Uterus (tissue), 4 donors: ENCODE measurements at regions of chr7 and their contacts with region 1.

Region 1: GRCh38 chr7:120987683-120988590 is 574 bp upstream of the CPED1 start:
- DNase-seq: peak; percentile 89 to 94
- H3K4me3 ChIP-seq: peak overlapping the region; percentile 49 to 62
- H3K27ac ChIP-seq: peak overlapping the region; percentile 89 to 96
- H3K4me1 ChIP-seq: no peaks in the 10 kb centered on the region
- H3K27me3 ChIP-seq: no peaks in the 10 kb centered on the region
- CTCF ChIP-seq: peak; percentile 90 to 99 (median 94)
- POLR2A ChIP-seq: peak; percentile 20 to 22

Region 2: GRCh38 chr7:120927454-120928103 is 60.4 kb before region 1 on chr7:
- intact Hi-C with region 1: no loop called
- DNase-seq: no peak
- H3K4me3 ChIP-seq: no peak overlapping the region
- H3K27ac ChIP-seq: no peak overlapping the region
- H3K4me1 ChIP-seq: no peaks in the 10 kb centered on the region
- H3K27me3 ChIP-seq: no peaks in the 10 kb centered on the region
- CTCF ChIP-seq: no peak
- POLR2A ChIP-seq: no peak

Region 3: DNA sequence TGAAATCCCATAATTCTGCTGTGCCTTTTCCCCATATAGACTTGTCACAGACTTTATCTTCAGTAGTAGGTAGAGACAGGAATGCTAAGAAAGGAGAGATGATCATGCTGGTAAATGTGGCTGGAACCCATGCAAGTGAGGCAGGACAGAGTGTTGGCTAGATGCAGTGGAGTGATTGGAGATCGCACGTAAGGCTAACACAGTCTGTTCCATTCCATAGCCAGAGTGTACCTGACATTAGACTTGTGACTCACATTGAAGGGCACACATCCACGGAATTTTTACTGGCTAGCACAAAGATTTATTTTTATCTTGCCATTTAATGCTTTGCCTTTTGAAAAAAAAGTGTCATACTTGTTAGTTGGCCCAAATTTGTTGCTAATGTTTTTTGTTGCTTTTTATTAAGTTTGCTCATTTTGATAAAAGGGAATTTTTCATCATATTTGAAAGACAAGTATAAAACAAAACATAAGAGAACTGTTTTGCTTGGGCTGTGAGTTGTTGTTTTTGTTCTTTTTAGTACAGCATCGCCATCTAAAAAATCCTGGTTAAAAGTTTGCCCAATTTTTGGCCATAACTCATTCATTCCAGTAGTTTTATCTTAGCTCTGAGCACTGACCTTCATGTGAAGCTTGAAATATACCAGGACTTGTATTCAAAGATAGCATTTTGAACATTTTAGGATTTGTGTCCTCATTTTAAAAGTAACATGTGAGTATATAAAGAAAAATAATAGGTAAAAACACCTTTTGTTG is 81.6 kb after region 1 on chr7:
- intact Hi-C with region 1: no loop called
- DNase-seq: peak; percentile 26 to 60
- H3K4me3 ChIP-seq: no peak overlapping the region
- H3K27ac ChIP-seq: peak overlapping the region; percentile 72 to 77
- H3K4me1 ChIP-seq: no peaks in the 10 kb centered on the region
- H3K27me3 ChIP-seq: no peaks in the 10 kb centered on the region
- CTCF ChIP-seq: no peak
- POLR2A ChIP-seq: no peak

Region 4: GRCh38 chr7:121081327-121081936 is 93.5 kb after region 1 on chr7:
- intact Hi-C with region 1: loop called (anchors 5 kb)
- DNase-seq: no peak
- H3K4me3 ChIP-seq: no peak overlapping the region
- H3K27ac ChIP-seq: peak overlapping the region; percentile 0 to 14
- H3K4me1 ChIP-seq: peaks cover 0 to 14% of the 10 kb centered on the region in 2 donors
- H3K27me3 ChIP-seq: no peaks in the 10 kb centered on the region
- CTCF ChIP-seq: peak; percentile 72 to 87 (median 76)
- POLR2A ChIP-seq: no peak